ENCODE measurements at regions of chr1 and their contacts with region 1.

Region 1: DNA sequence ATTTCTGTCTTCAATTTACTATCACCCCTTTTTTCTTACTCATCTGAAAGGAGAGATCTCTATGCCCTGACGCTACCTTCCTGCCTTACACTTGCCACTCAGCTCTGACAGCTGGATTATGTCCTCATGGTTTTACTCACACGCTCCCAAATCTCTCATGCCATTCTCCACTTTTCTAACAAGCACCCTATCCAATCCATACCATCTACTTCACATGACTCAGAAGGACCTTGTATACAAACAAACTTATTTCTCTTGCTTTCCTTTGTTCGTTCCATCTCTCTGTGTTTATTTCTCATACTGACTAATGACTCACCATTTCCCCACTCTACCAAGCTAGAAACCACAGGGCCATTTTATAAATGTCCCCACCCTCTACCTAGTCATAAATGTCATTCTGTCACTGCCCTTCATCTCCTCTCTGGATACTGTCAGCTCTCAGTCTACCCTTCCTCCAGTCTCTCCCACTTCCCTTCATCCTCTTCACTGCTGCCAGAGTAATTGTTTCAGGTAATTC is 87.3 kb downstream of the USP24 start:
- DNase-seq: peak in 1 of 2 donors; percentile 43
- ATAC-seq: peak; percentile 82 to 88 (median 84)
- H3K4me3 ChIP-seq: no peak overlapping the region
- H3K4me3 Mint-ChIP-seq: peak overlapping the region; percentile 54
- H3K27ac ChIP-seq: peak overlapping the region; percentile 86
- H3K27ac Mint-ChIP-seq: peak overlapping the region; percentile 75 to 92
- H3K4me1 ChIP-seq: peaks cover 12% of the 10 kb centered on the region
- H3K4me1 Mint-ChIP-seq: peaks cover 44 to 49% of the 10 kb centered on the region in 2 donors
- H3K27me3 ChIP-seq: no peaks in the 10 kb centered on the region
- H3K27me3 Mint-ChIP-seq: no peaks in the 10 kb centered on the region
- CTCF ChIP-seq: no peak

Region 2: GRCh38 chr1:55146781-55147180 is 18.9 kb after region 1 on chr1:
- intact Hi-C with region 1: no loop called
- DNase-seq: peak in 1 of 2 donors; percentile 43
- ATAC-seq: no peak
- H3K4me3 ChIP-seq: no peak overlapping the region
- H3K4me3 Mint-ChIP-seq: no peak overlapping the region
- H3K27ac ChIP-seq: no peak overlapping the region
- H3K27ac Mint-ChIP-seq: no peak overlapping the region
- H3K4me1 ChIP-seq: peaks cover 5% of the 10 kb centered on the region
- H3K4me1 Mint-ChIP-seq: peaks cover 10 to 11% of the 10 kb centered on the region in 2 donors
- H3K27me3 ChIP-seq: no peaks in the 10 kb centered on the region
- H3K27me3 Mint-ChIP-seq: no peaks in the 10 kb centered on the region
- CTCF ChIP-seq: no peak

Region 3: DNA sequence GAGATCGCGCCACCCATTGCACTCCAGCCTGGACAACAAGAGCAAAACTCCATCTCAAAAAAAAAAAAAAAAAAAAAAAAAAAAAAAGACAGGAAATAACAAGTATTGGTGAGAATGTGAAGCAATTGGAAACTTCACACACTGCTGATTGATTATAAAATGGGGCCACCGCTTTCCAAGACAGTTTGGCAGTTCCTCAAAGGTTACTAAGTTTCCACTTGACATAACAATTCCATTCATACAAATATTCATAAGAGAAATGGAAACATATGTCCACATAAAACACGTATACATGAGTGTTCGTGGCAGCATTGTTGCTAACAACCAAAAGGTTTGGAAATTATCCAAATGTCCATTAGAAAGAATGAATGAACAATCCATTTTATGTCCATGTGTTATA is 61.0 kb after region 1 on chr1:
- intact Hi-C with region 1: loop called (anchors 5 kb)
- DNase-seq: no peak
- ATAC-seq: peak in 1 of 3 donors; percentile 64
- H3K4me3 ChIP-seq: no peak overlapping the region
- H3K4me3 Mint-ChIP-seq: peak overlapping the region; percentile 10
- H3K27ac ChIP-seq: no peak overlapping the region
- H3K27ac Mint-ChIP-seq: peak overlapping the region; percentile 70 to 84
- H3K4me1 ChIP-seq: peaks cover 5% of the 10 kb centered on the region
- H3K4me1 Mint-ChIP-seq: peaks cover 70 to 84% of the 10 kb centered on the region in 2 donors
- H3K27me3 ChIP-seq: no peaks in the 10 kb centered on the region
- H3K27me3 Mint-ChIP-seq: no peaks in the 10 kb centered on the region
- CTCF ChIP-seq: no peak